Activated CD4-positive, alpha-beta memory T cell treated with anti-CD3 and anti-CD28 coated beads, Interleukin-2, amount 10 ng/mL, durations not matched to agents 7 days and 5 days (primary cell): ENCODE measurements at regions of chr2 and their contacts with region 1.

Region 1: DNA sequence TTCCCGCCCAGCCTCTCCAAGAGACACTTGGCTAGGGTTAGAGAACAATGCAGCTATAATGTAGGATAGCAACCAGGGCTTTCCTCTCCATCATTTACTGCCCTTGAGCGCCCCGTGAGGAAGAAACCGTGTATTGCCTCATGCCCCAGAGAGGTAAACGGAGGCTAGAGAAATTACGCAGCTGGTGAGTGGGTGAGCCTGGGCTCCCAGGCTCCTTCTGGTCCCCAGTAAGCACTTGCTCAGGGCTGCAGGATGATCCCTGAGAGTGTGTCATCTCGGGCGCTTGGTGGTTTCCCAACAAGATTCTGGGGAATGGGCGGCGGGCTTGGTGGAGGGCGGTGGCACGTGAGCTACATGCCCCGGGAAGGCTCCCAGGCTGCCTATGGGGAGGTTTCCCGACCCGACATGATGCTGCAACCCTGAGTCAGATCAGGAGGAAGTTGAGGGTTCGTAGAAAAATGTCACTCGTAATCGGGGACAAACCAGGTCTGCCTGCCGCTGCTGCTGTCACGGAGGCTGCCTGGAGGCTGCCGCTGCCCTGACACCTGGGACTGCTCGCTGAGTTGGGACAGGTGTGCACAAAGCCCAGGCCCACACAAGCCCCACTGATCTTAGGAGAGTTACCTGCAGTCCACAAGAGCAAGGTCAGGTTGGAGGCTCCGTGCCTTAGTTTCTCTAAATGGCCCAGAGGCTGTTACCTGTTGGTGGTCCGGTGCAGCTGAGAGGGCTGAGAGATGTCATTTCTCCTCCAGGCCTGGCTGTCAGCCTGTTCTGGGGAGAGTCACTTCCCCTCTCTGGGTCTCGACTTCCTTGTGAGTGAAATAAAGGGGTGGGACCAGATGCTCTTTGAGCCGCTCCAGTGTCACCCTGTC is at the start of gene GPR55:
- DNase-seq: peak; percentile 68
- H3K4me3 Mint-ChIP-seq: peak within 1 kb of the TSS; percentile 77
- H3K27ac Mint-ChIP-seq: peak within 1 kb of the TSS; percentile 81
- H3K4me1 Mint-ChIP-seq: peaks cover 60% of the 10 kb centered on the region
- H3K27me3 Mint-ChIP-seq: peaks cover 20% of the 10 kb centered on the region
- total RNA-seq, gene GPR55: 7.3 to 7.4 TPM

Region 2: DNA sequence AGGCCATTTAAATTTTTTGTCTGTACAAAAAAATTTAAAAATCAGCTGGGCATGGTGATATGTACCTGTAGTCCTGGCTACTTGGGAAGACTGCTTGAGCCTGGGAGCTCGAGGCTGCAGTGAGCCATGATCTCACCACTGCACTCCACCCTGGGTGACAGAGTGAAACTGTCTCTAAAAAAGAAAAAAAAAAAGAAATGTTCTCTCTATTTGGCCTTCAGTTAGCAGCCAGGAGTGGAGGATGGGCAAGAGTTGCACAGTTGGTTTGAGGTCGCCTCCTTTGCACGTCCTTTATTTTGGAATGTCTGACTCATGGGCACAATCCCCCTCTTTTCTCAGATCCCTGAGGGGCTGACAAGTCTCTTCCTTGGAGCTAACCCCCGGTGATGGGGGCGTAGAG is 33.6 kb before region 1 on chr2:
- CTCF ChIA-PET with region 1: no interaction called
- POLR2A ChIA-PET with region 1: no interaction called
- DNase-seq: no peak
- H3K4me3 Mint-ChIP-seq: no peak overlapping the region
- H3K27ac Mint-ChIP-seq: no peak overlapping the region
- H3K4me1 Mint-ChIP-seq: peaks cover 13% of the 10 kb centered on the region
- H3K27me3 Mint-ChIP-seq: peaks cover 25% of the 10 kb centered on the region

Region 3: GRCh38 chr2:230902180-230902899 is 22.4 kb before region 1 on chr2:
- CTCF ChIA-PET with region 1: interaction called, 21 read pairs
- POLR2A ChIA-PET with region 1: interaction called, 5 read pairs
- DNase-seq: peak; percentile 58
- H3K4me3 Mint-ChIP-seq: no peak overlapping the region
- H3K27ac Mint-ChIP-seq: no peak overlapping the region
- H3K4me1 Mint-ChIP-seq: peaks cover 41% of the 10 kb centered on the region
- H3K27me3 Mint-ChIP-seq: peaks cover 22% of the 10 kb centered on the region

Region 4: DNA sequence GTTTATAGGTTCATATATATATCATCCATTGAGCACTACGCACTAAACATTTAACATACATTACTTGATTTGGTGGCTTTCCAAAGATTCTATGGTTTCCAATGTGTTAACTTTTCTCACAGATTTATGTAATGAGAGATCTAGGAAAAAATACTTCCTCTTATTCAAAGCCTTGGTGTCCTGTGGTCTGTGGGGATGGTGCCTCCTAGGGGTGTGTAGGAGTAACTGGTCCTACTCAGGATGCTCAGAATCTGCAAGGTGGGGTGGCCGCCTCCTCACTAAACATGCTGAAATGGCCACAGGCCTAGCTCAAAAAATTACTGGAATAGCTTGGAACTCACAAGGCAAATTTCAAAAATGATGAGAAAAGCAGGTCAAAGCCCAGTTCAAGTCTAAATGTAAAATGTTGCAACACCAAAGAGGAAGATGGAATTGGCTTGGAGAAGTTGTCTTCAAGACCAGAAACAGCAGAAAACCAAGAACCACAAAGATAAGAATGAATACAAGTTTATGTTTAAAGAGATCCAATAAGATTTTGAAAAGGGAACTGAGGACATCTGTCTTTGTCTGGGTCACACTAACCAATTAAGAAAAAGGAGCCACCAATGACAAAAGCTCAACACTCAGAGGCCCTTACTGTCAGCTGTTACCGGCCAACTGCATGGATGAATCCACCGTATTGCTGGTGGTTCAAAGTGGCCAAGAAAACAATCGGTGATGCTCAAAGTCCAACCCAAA is 11.1 kb before region 1 on chr2:
- CTCF ChIA-PET with region 1: interaction called, 28 read pairs
- POLR2A ChIA-PET with region 1: interaction called, 7 read pairs
- DNase-seq: no peak
- H3K4me3 Mint-ChIP-seq: no peak overlapping the region
- H3K27ac Mint-ChIP-seq: no peak overlapping the region
- H3K4me1 Mint-ChIP-seq: peaks cover 41% of the 10 kb centered on the region
- H3K27me3 Mint-ChIP-seq: peaks cover 28% of the 10 kb centered on the region